ENCODE measurements at regions of chr10 and their contacts with region 1.

Region 1: GRCh38 chr10:19819419-19820033 is 3.3 kb downstream of the PLXDC2 start:
- DNase-seq: no peak
- H3K4me3 Mint-ChIP-seq: no peak overlapping the region
- H3K27ac Mint-ChIP-seq: no peak overlapping the region
- H3K4me1 Mint-ChIP-seq: peaks cover 5% of the 10 kb centered on the region
- H3K27me3 Mint-ChIP-seq: peaks cover 38% of the 10 kb centered on the region

Region 2: DNA sequence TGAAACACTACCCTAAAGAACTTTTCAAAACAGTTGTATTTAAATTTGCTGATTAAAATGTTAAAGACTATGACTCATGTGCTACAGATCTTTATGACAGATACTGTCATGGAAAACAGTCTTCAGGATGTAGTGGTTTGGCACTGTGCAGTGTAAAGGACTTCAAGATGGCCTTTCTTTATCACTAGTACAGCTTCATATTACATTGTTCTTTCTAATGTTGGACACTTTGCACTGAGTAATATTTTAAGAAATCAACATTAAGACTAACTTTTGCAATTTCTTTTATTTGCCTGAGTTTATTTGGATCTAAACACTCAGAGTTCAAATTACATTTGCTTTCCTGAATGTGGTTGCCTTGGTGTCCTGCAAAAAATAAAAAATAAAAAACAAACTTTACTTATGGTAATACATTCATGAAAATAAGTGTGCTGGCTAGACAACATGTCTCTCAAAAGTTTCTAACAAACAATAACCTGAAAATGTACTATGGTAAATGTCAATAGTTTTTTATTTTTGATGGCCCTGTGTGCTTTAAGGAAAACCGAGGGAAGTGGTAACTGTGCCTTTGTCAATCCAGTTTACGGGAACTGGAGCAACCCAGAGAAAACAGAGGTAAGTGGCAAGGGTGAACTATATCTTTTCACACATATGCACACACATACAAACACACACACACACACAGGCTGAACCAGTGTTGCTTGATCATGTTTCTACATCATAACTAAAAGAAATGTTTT is 89.2 kb before region 1 on chr10:
- CTCF ChIA-PET with region 1: no interaction called
- intact Hi-C with region 1: no loop called
- DNase-seq: no peak
- H3K4me3 Mint-ChIP-seq: no peak overlapping the region
- H3K27ac Mint-ChIP-seq: no peak overlapping the region
- H3K4me1 Mint-ChIP-seq: no peaks in the 10 kb centered on the region
- H3K27me3 Mint-ChIP-seq: no peaks in the 10 kb centered on the region

Region 3: GRCh38 chr10:20768843-20769242 is 949.3 kb after region 1 on chr10:
- CTCF ChIA-PET with region 1: no interaction called
- intact Hi-C with region 1: loop called (anchors 2 kb)
- DNase-seq: no peak
- H3K4me3 Mint-ChIP-seq: no peak overlapping the region
- H3K27ac Mint-ChIP-seq: no peak overlapping the region
- H3K4me1 Mint-ChIP-seq: no peaks in the 10 kb centered on the region
- H3K27me3 Mint-ChIP-seq: no peaks in the 10 kb centered on the region

Region 4: DNA sequence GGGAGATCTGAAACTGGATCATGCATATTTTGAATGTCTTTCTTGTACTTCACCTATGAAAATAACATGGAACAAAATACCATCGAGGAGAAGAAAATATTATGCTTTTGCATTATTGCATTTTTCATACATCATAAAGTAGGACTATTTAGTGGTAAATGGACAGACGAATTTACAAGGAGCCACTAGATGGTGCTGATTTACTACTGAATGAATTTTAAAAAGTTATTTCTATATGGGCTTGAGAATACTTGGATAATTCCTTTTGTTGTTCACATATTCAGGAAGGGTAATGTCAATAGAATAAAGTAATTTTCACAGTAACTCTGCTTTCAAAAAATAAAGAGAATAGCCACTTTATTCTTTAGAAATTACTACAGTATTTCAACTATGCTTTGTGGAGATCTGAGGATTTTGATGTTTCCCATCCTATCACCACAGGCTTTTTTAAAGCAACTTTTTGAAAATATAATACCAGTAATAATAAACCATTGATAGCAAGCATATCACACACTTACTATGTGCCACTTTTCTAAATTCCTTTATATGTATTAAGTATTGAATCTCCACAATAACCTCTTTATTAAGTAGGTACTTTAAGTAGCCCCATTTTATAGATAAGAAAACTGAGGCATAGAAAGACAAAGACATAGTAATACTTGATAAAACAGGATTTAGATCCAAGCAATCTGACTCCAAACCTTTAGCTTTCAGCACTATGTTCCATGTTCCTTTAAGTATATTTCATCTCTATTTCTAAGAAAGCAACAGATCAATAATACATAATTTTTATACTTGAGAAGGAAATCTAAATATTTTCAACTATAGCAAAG is 1039.0 kb after region 1 on chr10:
- CTCF ChIA-PET with region 1: interaction called, 8 read pairs
- intact Hi-C with region 1: loop called (anchors 1 kb)
- DNase-seq: no peak
- H3K4me3 Mint-ChIP-seq: no peak overlapping the region
- H3K27ac Mint-ChIP-seq: no peak overlapping the region
- H3K4me1 Mint-ChIP-seq: no peaks in the 10 kb centered on the region
- H3K27me3 Mint-ChIP-seq: no peaks in the 10 kb centered on the region

Measured in activated naive CD4-positive, alpha-beta T cell treated with anti-CD3 and anti-CD28 coated beads for 36 hours (primary cell).